ENCODE measurements at regions of chr17 and their contacts with region 1.

Region 1: GRCh38 chr17:75319904-75320691 is 30.9 kb upstream of the SLC25A19 start:
- DNase-seq: peak in 3 of 5 donors; percentile 17 to 55 (median 26)
- H3K4me3 ChIP-seq: no peak overlapping the region
- H3K27ac ChIP-seq: no peak overlapping the region
- H3K4me1 ChIP-seq: no peaks in the 10 kb centered on the region
- H3K27me3 ChIP-seq: no peaks in the 10 kb centered on the region
- CTCF ChIP-seq: no peak

Region 2: DNA sequence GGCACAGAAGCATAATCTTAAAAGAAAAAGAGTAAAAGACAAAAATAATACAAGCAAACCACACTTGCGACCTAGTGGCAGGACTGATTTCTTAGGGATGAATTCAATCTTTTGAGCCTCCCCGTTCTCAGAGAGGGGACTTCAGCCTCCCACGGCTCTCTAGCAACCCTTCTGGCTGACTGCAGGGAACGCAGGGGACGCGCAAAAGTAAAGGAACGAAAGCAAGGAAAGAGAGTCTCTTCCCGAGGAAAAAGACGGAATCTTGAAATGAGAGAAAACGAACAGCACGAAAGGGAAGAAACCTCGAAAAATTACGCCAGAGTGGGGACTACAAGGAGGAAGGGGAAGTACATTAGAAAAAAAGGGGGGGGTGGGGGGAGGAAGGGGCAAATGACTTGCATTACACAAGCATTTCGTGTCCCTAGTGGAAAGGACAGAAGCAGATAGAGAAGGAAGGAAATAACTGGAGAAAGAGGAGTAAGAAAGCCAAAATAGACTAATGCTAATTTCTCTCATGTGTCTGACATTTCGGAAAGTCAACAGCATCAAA is 84.2 kb after region 1 on chr17:
- intact Hi-C with region 1: loop called (anchors 5 kb)
- DNase-seq: peak in 4 of 5 donors; percentile 72 to 94 (median 84)
- H3K4me3 ChIP-seq: peak overlapping the region; percentile 88 to 96 (median 90)
- H3K27ac ChIP-seq: peak overlapping the region; percentile 5 to 56
- H3K4me1 ChIP-seq: peaks cover 0 to 5% (median 4%) of the 10 kb centered on the region in 3 donors
- H3K27me3 ChIP-seq: no peaks in the 10 kb centered on the region
- CTCF ChIP-seq: peak; percentile 74

Measured in kidney (tissue), 22 donors.